ENCODE measurements at regions of chr6 and their contacts with region 1.

Region 1: DNA sequence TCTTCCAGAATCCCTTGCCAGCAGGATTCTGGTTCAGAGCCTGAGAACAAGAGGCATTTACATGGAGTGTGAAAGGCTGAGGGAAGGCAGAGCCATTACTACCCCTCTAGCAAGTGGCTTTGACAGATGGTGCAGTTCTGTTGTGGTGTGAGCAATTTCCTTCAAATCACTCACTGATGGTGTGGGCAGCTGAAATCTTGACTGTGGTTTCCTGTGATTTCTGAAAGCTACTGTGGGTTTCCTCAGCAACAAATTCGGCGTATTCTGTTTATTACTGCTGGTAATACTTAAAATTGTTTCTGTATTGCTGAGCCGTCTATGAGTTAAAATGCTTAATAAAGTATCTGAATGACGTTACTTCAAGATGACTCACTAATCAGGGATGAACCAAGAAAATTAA is 181.5 kb upstream of the TCF21 start:
- DNase-seq: peak; percentile 97
- ATAC-seq: peak; percentile 73
- H3K4me3 ChIP-seq: no peak overlapping the region
- H3K27ac ChIP-seq: peak overlapping the region; percentile 82
- H3K4me1 ChIP-seq: peaks cover 11% of the 10 kb centered on the region
- H3K27me3 ChIP-seq: no peaks in the 10 kb centered on the region
- CTCF ChIP-seq: no peak
- POLR2A ChIP-seq: no peak
- RAD21 ChIP-seq: peak; percentile 21; the same call in 1 of the 2 replicates

Region 2: GRCh38 chr6:133265066-133265465 is 442.4 kb before region 1 on chr6:
- CTCF ChIA-PET with region 1: no interaction called
- POLR2A ChIA-PET with region 1: no interaction called
- dilution Hi-C with region 1: no loop called
- in situ Hi-C with region 1: no loop called
- intact Hi-C with region 1: no loop called
- DNase-seq: no peak
- ATAC-seq: no peak
- H3K4me3 ChIP-seq: no peak overlapping the region
- H3K27ac ChIP-seq: no peak overlapping the region
- H3K4me1 ChIP-seq: no peaks in the 10 kb centered on the region
- H3K27me3 ChIP-seq: no peaks in the 10 kb centered on the region
- CTCF ChIP-seq: no peak
- POLR2A ChIP-seq: no peak
- RAD21 ChIP-seq: no peak

Region 3: GRCh38 chr6:133634474-133634873 is 73.0 kb before region 1 on chr6:
- CTCF ChIA-PET with region 1: no interaction called
- POLR2A ChIA-PET with region 1: no interaction called
- dilution Hi-C with region 1: no loop called
- in situ Hi-C with region 1: no loop called
- intact Hi-C with region 1: no loop called
- DNase-seq: no peak
- ATAC-seq: no peak
- H3K4me3 ChIP-seq: no peak overlapping the region
- H3K27ac ChIP-seq: no peak overlapping the region; the same call in 1 of the 2 replicates
- H3K4me1 ChIP-seq: peaks cover 31% of the 10 kb centered on the region
- H3K27me3 ChIP-seq: no peaks in the 10 kb centered on the region
- CTCF ChIP-seq: no peak
- POLR2A ChIP-seq: no peak
- RAD21 ChIP-seq: no peak

Region 4: GRCh38 chr6:133644892-133645619 is 62.4 kb before region 1 on chr6:
- CTCF ChIA-PET with region 1: no interaction called
- POLR2A ChIA-PET with region 1: no interaction called
- dilution Hi-C with region 1: no loop called
- in situ Hi-C with region 1: no loop called
- intact Hi-C with region 1: loop called (anchors 5 kb)
- DNase-seq: peak; percentile 74
- ATAC-seq: peak; percentile 75
- H3K4me3 ChIP-seq: no peak overlapping the region
- H3K27ac ChIP-seq: peak overlapping the region; percentile 90
- H3K4me1 ChIP-seq: peaks cover 16% of the 10 kb centered on the region
- H3K27me3 ChIP-seq: no peaks in the 10 kb centered on the region
- CTCF ChIP-seq: no peak
- POLR2A ChIP-seq: no peak
- RAD21 ChIP-seq: no peak